ENCODE measurements at regions of chr2 and their contacts with region 1.

Region 1: GRCh38 chr2:189661148-189661956 is at the start of gene ASNSD1:
- DNase-seq: peak; percentile 99
- H3K4me3 ChIP-seq: peak within 1 kb of the TSS; percentile 79 to 90 (median 80)
- H3K27ac ChIP-seq: peak within 1 kb of the TSS; percentile 85 to 90 (median 88)
- H3K4me1 ChIP-seq: peaks cover 0 to 29% (median 13%) of the 10 kb centered on the region in 4 donors
- H3K27me3 ChIP-seq: no peaks in the 10 kb centered on the region
- CTCF ChIP-seq: peak; percentile 94 to 100 (median 94)
- EP300 ChIP-seq: no peak
- POLR2A ChIP-seq: peak; percentile 84
- total RNA-seq, gene ASNSD1: 11.3 to 35.2 (median 20.2) TPM

Region 2: GRCh38 chr2:189698020-189698887 is 36.9 kb after region 1 on chr2:
- in situ Hi-C with region 1: no loop called
- intact Hi-C with region 1: loop called (anchors 5 kb)
- DNase-seq: peak; percentile 21
- H3K4me3 ChIP-seq: no peak overlapping the region
- H3K27ac ChIP-seq: no peak overlapping the region
- H3K4me1 ChIP-seq: peaks cover 0 to 6% (median 0%) of the 10 kb centered on the region in 4 donors
- H3K27me3 ChIP-seq: no peaks in the 10 kb centered on the region
- CTCF ChIP-seq: peak; percentile 52 to 69 (median 65)
- EP300 ChIP-seq: no peak
- POLR2A ChIP-seq: no peak

Region 3: GRCh38 chr2:189783927-189784867 is 122.8 kb after region 1 on chr2 and contains the starts of genes ORMDL1 and PMS1:
- in situ Hi-C with region 1: loop called in 1 of 4 experiments (anchors 25 kb)
- intact Hi-C with region 1: no loop called
- DNase-seq: peak; percentile 97
- H3K4me3 ChIP-seq: peak within 1 kb of the TSS; percentile 61 to 73 (median 68)
- H3K27ac ChIP-seq: peak within 1 kb of the TSS; percentile 93 to 96 (median 94)
- H3K4me1 ChIP-seq: peaks cover 16 to 31% (median 22%) of the 10 kb centered on the region in 4 donors
- H3K27me3 ChIP-seq: no peaks in the 10 kb centered on the region
- CTCF ChIP-seq: peak in 3 of 5 experiments; percentile 8 to 19 (median 18)
- EP300 ChIP-seq: no peak
- POLR2A ChIP-seq: peak; percentile 96
- total RNA-seq, gene ORMDL1: 27.5 to 133 (median 86.5) TPM
- total RNA-seq, gene PMS1: 5.2 to 19.1 (median 9.7) TPM

Region 4: GRCh38 chr2:190069936-190070696 is 408.8 kb after region 1 on chr2:
- in situ Hi-C with region 1: loop called in 1 of 4 experiments (anchors 25 kb)
- intact Hi-C with region 1: no loop called
- DNase-seq: no peak
- H3K4me3 ChIP-seq: no peak overlapping the region
- H3K27ac ChIP-seq: no peak overlapping the region
- H3K4me1 ChIP-seq: peaks cover 0 to 4% (median 0%) of the 10 kb centered on the region in 4 donors
- H3K27me3 ChIP-seq: no peaks in the 10 kb centered on the region
- CTCF ChIP-seq: peak; percentile 50 to 67 (median 64)
- EP300 ChIP-seq: no peak
- POLR2A ChIP-seq: no peak

Measured in transverse colon (tissue), 4 donors.